ENCODE measurements at regions of chr5 and their contacts with region 1.

Region 1: GRCh38 chr5:131164191-131165118 is 601 bp downstream of the HINT1 start:
- DNase-seq: peak; percentile 81
- H3K4me3 ChIP-seq: peak overlapping the region; percentile 86
- H3K27ac ChIP-seq: peak overlapping the region; percentile 89
- H3K4me1 ChIP-seq: peaks cover 10% of the 10 kb centered on the region
- H3K27me3 ChIP-seq: no peaks in the 10 kb centered on the region
- CTCF ChIP-seq: no peak

Region 2: GRCh38 chr5:130912088-130912487 is 252.4 kb before region 1 on chr5:
- CTCF ChIA-PET with region 1: no interaction called
- POLR2A ChIA-PET with region 1: no interaction called
- intact Hi-C with region 1: no loop called
- DNase-seq: peak; percentile 1
- H3K4me3 ChIP-seq: no peak overlapping the region
- H3K27ac ChIP-seq: no peak overlapping the region
- H3K4me1 ChIP-seq: no peaks in the 10 kb centered on the region
- H3K27me3 ChIP-seq: peaks cover 31% of the 10 kb centered on the region
- CTCF ChIP-seq: 0 out of 2 replicates have a peak, but pooled peaks have one; percentile 13

Region 3: GRCh38 chr5:131382407-131383395 is 218.2 kb after region 1 on chr5:
- CTCF ChIA-PET with region 1: no interaction called
- POLR2A ChIA-PET with region 1: no interaction called
- intact Hi-C with region 1: loop called (anchors 1 kb)
- DNase-seq: peak; percentile 83
- H3K4me3 ChIP-seq: no peak overlapping the region
- H3K27ac ChIP-seq: no peak overlapping the region
- H3K4me1 ChIP-seq: peaks cover 43% of the 10 kb centered on the region
- H3K27me3 ChIP-seq: no peaks in the 10 kb centered on the region
- CTCF ChIP-seq: peak; percentile 63

Region 4: GRCh38 chr5:131417240-131417869 is 252.9 kb after region 1 on chr5:
- CTCF ChIA-PET with region 1: interaction called, 3 read pairs
- POLR2A ChIA-PET with region 1: no interaction called
- intact Hi-C with region 1: loop called (anchors 1 kb)
- DNase-seq: peak; percentile 80
- H3K4me3 ChIP-seq: no peak overlapping the region
- H3K27ac ChIP-seq: no peak overlapping the region
- H3K4me1 ChIP-seq: no peaks in the 10 kb centered on the region
- H3K27me3 ChIP-seq: no peaks in the 10 kb centered on the region
- CTCF ChIP-seq: peak; percentile 90